ENCODE measurements at regions of chr3 and their contacts with region 1.

Region 1: DNA sequence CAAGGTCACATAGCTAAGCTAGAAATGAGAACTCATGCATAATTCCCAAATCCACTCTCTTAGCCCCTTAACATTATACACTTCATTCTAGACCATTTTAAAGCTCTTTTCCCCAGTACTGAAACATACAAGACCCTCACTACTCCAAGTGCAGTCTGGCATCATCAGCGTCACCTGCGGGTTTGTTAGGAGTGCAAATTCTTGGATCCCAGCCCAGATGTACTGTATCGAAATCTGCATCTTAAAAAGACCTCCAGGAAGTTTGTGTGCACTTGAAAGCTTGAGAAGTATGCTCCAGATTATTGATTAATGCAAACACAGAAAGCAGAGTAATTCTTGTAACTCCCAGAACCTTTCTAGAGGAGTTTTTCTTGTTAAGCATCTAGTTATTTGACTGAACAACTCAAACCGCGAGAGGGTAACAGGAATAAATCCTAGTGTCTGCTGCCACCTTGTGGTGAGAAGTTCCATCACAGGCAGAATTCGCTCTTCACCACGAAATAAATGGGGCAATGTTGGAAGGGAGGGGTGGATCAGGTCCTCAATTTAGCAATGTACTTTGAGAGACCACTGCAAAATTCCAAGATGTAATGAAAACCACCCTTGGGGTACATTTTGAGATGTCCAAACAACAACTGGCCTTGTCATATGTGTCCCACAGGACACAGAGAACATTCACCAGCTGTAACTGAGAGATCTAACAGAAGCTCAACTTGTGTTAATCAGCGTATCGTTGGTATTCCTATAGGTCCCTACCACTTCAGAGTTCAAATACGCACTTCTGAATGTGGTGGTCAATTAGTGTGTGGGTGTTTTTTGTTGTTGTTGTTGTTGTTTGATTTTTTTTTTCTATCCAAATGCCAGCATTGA is 583 bp upstream of the C3orf49 start:
- DNase-seq: peak; percentile 61
- ATAC-seq: peak; percentile 85
- H3K4me3 ChIP-seq: no peak overlapping the region
- H3K27ac ChIP-seq: no peak overlapping the region
- H3K4me1 ChIP-seq: no peaks in the 10 kb centered on the region
- H3K27me3 ChIP-seq: no peaks in the 10 kb centered on the region
- CTCF ChIP-seq: peak; percentile 85
- POLR2A ChIP-seq: no peak
- RAD21 ChIP-seq: peak; percentile 90

Region 2: GRCh38 chr3:62622553-62623193 is 1195.8 kb before region 1 on chr3:
- CTCF ChIA-PET with region 1: no interaction called
- POLR2A ChIA-PET with region 1: no interaction called
- dilution Hi-C with region 1: no loop called
- in situ Hi-C with region 1: loop called (anchors 25 kb)
- intact Hi-C with region 1: loop called (anchors 1 kb)
- DNase-seq: peak; percentile 61
- ATAC-seq: peak; percentile 71
- H3K4me3 ChIP-seq: no peak overlapping the region
- H3K27ac ChIP-seq: no peak overlapping the region
- H3K4me1 ChIP-seq: no peaks in the 10 kb centered on the region
- H3K27me3 ChIP-seq: peaks cover 14% of the 10 kb centered on the region
- CTCF ChIP-seq: peak; percentile 77
- POLR2A ChIP-seq: no peak
- RAD21 ChIP-seq: peak; percentile 72

Region 3: DNA sequence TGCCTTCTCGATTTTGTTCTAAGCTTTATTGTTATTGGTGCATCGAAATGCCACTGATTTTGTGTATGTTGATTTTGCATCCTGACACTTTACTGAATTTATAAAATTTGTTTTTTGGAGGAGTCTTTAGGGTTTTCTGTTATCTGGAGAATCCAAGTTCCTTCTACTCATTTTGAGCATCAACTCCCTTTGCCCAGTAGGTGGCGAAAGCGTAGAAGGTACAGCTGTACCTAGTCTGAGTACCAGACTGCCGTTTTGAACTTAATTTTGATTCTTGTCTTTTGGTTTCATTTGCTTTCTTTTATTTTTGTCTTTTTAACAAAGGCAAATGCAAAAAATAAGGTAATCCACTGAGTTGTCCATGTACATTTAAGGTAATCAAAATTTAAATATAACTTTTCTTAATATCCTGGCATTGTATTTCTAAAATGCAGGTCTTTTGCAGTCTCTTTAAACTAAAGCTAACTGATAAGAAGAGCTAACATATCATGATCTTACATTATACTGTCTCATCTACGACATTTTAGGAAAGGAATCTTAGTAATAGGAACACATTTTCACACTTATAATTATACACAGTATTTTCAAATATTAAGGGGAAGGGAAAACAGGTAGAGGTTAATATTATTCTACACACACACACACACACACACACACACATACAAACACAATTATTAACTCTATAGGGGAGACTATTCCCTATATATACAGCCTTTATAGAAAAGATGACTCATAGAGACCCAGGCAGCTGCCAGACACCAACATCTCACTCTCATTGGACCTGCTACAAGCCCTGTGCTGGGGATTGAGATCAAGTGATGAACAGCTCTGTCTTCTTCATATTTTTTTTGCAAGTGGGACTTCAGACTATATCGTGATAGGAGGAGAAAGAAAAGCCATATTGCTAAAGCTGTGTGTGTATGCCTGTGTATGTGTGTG is 468.7 kb before region 1 on chr3:
- CTCF ChIA-PET with region 1: interaction called, 52 read pairs
- POLR2A ChIA-PET with region 1: no interaction called
- dilution Hi-C with region 1: no loop called
- in situ Hi-C with region 1: loop called (anchors 5 kb)
- intact Hi-C with region 1: loop called (anchors 1 kb)
- DNase-seq: peak; percentile 65
- ATAC-seq: peak; percentile 85
- H3K4me3 ChIP-seq: no peak overlapping the region
- H3K27ac ChIP-seq: no peak overlapping the region
- H3K4me1 ChIP-seq: no peaks in the 10 kb centered on the region
- H3K27me3 ChIP-seq: peaks cover 2% of the 10 kb centered on the region; the same call in 1 of the 2 replicates
- CTCF ChIP-seq: peak; percentile 83
- POLR2A ChIP-seq: no peak
- RAD21 ChIP-seq: peak; percentile 71

Region 4: GRCh38 chr3:63639806-63640205 is 178.7 kb before region 1 on chr3:
- CTCF ChIA-PET with region 1: interaction called, 12 read pairs
- POLR2A ChIA-PET with region 1: no interaction called
- dilution Hi-C with region 1: no loop called
- in situ Hi-C with region 1: no loop called
- intact Hi-C with region 1: no loop called
- DNase-seq: no peak
- ATAC-seq: no peak
- H3K4me3 ChIP-seq: no peak overlapping the region
- H3K27ac ChIP-seq: no peak overlapping the region
- H3K4me1 ChIP-seq: no peaks in the 10 kb centered on the region
- H3K27me3 ChIP-seq: peaks cover under 1% of the 10 kb centered on the region; the same call in 1 of the 2 replicates
- CTCF ChIP-seq: no peak
- POLR2A ChIP-seq: no peak
- RAD21 ChIP-seq: no peak

Region 5: DNA sequence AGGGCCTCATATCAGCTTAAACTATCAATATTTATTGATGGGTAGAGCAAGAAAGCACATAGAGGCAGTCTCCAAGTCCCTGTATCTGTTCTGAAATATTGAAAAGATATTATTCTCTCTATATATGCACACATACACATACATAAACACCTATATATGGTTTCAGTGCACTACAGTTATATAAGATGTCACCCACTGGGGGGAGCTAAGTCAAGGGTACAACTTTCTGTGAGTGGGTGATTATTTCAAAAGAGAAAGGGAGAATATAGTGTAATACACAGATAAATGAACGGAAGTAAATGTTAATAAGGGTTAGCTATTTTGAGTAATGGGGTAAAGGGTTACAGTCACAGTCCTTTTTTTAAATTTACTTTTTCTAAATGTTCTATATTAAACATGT is 157.3 kb before region 1 on chr3:
- CTCF ChIA-PET with region 1: no interaction called
- POLR2A ChIA-PET with region 1: no interaction called
- dilution Hi-C with region 1: no loop called
- in situ Hi-C with region 1: no loop called
- intact Hi-C with region 1: loop called (anchors 1 kb)
- DNase-seq: no peak
- ATAC-seq: peak; percentile 40; the same call in 1 of the 2 replicates
- H3K4me3 ChIP-seq: no peak overlapping the region
- H3K27ac ChIP-seq: no peak overlapping the region
- H3K4me1 ChIP-seq: no peaks in the 10 kb centered on the region
- H3K27me3 ChIP-seq: no peaks in the 10 kb centered on the region; the same call in 1 of the 2 replicates
- CTCF ChIP-seq: peak; percentile 36
- POLR2A ChIP-seq: no peak
- RAD21 ChIP-seq: peak; percentile 28; the same call in 1 of the 2 replicates

Measured in IMR-90 (cell line).